ENCODE measurements at regions of chr3 and their contacts with region 1.

Region 1: GRCh38 chr3:153291056-153291685 is 129.1 kb downstream of the RAP2B start:
- DNase-seq: no peak
- H3K4me3 ChIP-seq: no peak overlapping the region
- H3K27ac ChIP-seq: no peak overlapping the region
- H3K4me1 ChIP-seq: no peaks in the 10 kb centered on the region
- H3K27me3 ChIP-seq: no peaks in the 10 kb centered on the region
- CTCF ChIP-seq: peak; percentile 38; the same call in 1 of the 2 replicates

Region 2: GRCh38 chr3:153338487-153338886 is 47.3 kb after region 1 on chr3:
- CTCF ChIA-PET with region 1: no interaction called
- POLR2A ChIA-PET with region 1: interaction called, 11 read pairs
- intact Hi-C with region 1: no loop called
- DNase-seq: no peak
- H3K4me3 ChIP-seq: no peak overlapping the region
- H3K27ac ChIP-seq: no peak overlapping the region
- H3K4me1 ChIP-seq: no peaks in the 10 kb centered on the region
- H3K27me3 ChIP-seq: no peaks in the 10 kb centered on the region
- CTCF ChIP-seq: no peak